ENCODE measurements at regions of chr6 and their contacts with region 1.

Region 1: GRCh38 chr6:158972241-158973233 is 27.5 kb downstream of the RSPH3 start:
- DNase-seq: peak; percentile 55
- ATAC-seq: peak; percentile 72
- H3K4me3 ChIP-seq: no peak overlapping the region
- H3K27ac ChIP-seq: peak overlapping the region; percentile 6; the same call in 1 of the 2 replicates
- H3K4me1 ChIP-seq: peaks cover 0 to 20% of the 10 kb centered on the region in 2 experiments; a peak in 2 of 4 replicates
- H3K27me3 ChIP-seq: no peaks in the 10 kb centered on the region
- CTCF ChIP-seq: peak; percentile 31 to 70 (median 59); a peak in 5 of 6 replicates
- POLR2A ChIP-seq: no peak
- RAD21 ChIP-seq: peak; percentile 93

Region 2: DNA sequence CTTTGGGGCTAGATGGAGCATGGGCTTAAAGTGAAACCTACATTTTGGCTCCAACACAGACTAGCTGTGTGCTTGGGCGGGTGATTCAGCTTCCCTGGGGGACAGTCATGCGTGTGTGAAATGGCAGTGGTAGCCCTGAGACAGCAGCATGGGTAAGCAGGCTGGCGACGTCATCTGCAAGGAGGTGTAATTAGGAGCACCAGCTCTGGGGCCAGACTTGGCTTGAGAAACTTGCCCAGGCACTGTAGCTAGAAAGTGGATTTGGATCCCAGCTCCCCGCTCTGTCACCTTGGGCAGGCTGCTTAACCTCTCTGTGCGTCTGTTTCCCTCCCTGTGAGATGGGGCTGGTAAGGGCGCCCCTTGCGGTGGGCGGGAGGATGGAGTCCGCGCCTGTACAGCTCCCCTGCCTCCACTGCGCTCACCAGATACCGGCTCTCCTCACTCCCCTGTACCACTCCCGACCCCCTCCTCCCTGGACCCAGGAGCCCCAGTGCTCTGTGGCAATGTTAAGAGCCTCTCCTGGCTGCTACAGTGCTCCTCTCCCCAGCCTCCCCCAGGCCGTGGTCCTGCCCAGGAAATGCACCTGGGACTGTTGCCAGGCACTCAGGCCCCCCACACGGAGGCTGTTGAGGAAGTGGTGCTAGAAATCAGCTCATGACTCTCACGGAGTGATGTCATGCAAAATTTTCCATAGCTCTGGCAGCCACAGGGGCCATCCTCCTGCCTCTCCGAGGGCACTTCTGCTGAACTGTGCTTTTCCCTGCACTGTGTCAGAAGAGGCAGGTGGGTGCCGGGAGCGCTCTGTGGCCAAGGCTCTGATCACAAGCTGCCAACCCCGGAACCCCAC is 946.3 kb before region 1 on chr6:
- CTCF ChIA-PET with region 1: no interaction called
- POLR2A ChIA-PET with region 1: no interaction called
- RAD21 ChIA-PET with region 1: no interaction called
- intact Hi-C with region 1: no loop called
- DNase-seq: no peak
- ATAC-seq: peak; percentile 79
- H3K4me3 ChIP-seq: peak overlapping the region in 1 of 2 experiments; percentile 24; a peak in 2 of 4 replicates
- H3K27ac ChIP-seq: peak overlapping the region; percentile 61
- H3K4me1 ChIP-seq: peaks cover 30 to 57% of the 10 kb centered on the region in 2 experiments
- H3K27me3 ChIP-seq: no peaks in the 10 kb centered on the region
- CTCF ChIP-seq: peak in 2 of 3 experiments; percentile 59 to 69; a peak in 4 of 6 replicates
- POLR2A ChIP-seq: no peak
- RAD21 ChIP-seq: peak; percentile 12; the same call in 1 of the 2 replicates

Region 3: GRCh38 chr6:158819213-158819909 is 153.2 kb before region 1 on chr6 and contains the start of gene EZR:
- CTCF ChIA-PET with region 1: no interaction called
- POLR2A ChIA-PET with region 1: no interaction called
- RAD21 ChIA-PET with region 1: no interaction called
- intact Hi-C with region 1: loop called (anchors 2 kb)
- DNase-seq: peak; percentile 73
- ATAC-seq: peak; percentile 73
- H3K4me3 ChIP-seq: peak within 1 kb of the TSS; percentile 77 to 81
- H3K27ac ChIP-seq: peak within 1 kb of the TSS; percentile 92
- H3K4me1 ChIP-seq: peaks cover 28 to 39% of the 10 kb centered on the region in 2 experiments
- H3K27me3 ChIP-seq: no peaks in the 10 kb centered on the region
- CTCF ChIP-seq: 0 out of 6 replicates have a peak, but pooled peaks of 1 of the 3 experiments have one; percentile 2
- POLR2A ChIP-seq: peak; percentile 80
- RAD21 ChIP-seq: no peak
- total RNA-seq, gene EZR: 1,402 TPM